B cell (primary cell): ENCODE measurements at regions of chr10 and their contacts with region 1.

Region 1: DNA sequence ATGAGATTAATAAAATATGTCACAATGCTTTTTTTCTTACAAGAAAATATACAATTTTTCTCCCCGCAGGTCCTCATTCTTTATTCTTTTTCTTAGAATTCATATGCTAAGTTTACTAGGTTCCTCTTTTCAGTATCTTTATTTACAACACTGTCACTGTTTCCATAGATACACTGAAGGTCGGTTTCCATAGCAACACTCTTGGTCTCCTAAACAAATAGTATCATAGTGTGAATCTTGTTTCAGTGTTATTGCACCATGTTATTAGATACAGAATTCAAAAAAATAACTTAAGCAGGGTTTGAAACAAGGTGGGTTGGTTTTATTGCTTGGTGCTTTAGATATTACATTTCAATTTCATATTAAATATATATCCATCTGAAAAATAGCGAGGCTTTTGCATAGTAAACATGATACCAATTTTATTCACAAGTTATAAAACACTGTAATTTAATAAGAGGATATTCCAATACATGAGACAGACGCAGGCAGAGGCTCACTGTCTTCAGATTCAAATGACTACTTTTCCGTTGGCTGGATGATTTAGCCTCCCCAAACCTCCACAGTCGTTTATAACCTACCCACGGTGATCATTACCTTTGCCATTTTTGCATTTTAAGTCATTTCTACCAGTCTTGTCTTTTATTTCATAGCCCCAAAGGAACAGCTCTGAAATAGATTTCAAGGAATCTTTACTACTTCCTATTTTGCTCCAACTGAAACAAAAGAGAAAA is 88.9 kb upstream of the KLF6 start:
- DNase-seq: peak; percentile 93
- ATAC-seq: peak; percentile 56
- H3K4me3 ChIP-seq: peak overlapping the region in 1 of 5 experiments; percentile 37
- H3K4me3 Mint-ChIP-seq: peak overlapping the region; percentile 57
- H3K27ac ChIP-seq: peak overlapping the region; percentile 89 to 99
- H3K27ac Mint-ChIP-seq: peak overlapping the region; percentile 98
- H3K4me1 ChIP-seq: peaks cover 44 to 50% of the 10 kb centered on the region in 2 donors
- H3K4me1 Mint-ChIP-seq: peaks cover 50% of the 10 kb centered on the region
- H3K27me3 ChIP-seq: no peaks in the 10 kb centered on the region
- H3K27me3 Mint-ChIP-seq: no peaks in the 10 kb centered on the region
- CTCF ChIP-seq: no peak

Region 2: GRCh38 chr10:3090914-3091787 is 782.7 kb before region 1 on chr10:
- CTCF ChIA-PET with region 1: no interaction called
- POLR2A ChIA-PET with region 1: no interaction called
- intact Hi-C with region 1: no loop called
- DNase-seq: no peak
- ATAC-seq: no peak
- H3K4me3 ChIP-seq: no peak overlapping the region
- H3K4me3 Mint-ChIP-seq: no peak overlapping the region
- H3K27ac ChIP-seq: no peak overlapping the region
- H3K27ac Mint-ChIP-seq: no peak overlapping the region
- H3K4me1 ChIP-seq: peaks cover 0 to 4% of the 10 kb centered on the region in 2 donors
- H3K4me1 Mint-ChIP-seq: peaks cover 21% of the 10 kb centered on the region
- H3K27me3 ChIP-seq: no peaks in the 10 kb centered on the region
- H3K27me3 Mint-ChIP-seq: no peaks in the 10 kb centered on the region
- CTCF ChIP-seq: no peak

Region 3: GRCh38 chr10:3805791-3806461 is 68.0 kb before region 1 on chr10:
- CTCF ChIA-PET with region 1: no interaction called
- POLR2A ChIA-PET with region 1: interaction called, 8 read pairs
- intact Hi-C with region 1: loop called (anchors 1 kb)
- DNase-seq: peak; percentile 59
- ATAC-seq: peak; percentile 54
- H3K4me3 ChIP-seq: peak overlapping the region in 1 of 5 experiments; percentile 16
- H3K4me3 Mint-ChIP-seq: peak overlapping the region; percentile 74
- H3K27ac ChIP-seq: peak overlapping the region; percentile 84 to 85
- H3K27ac Mint-ChIP-seq: peak overlapping the region; percentile 97
- H3K4me1 ChIP-seq: peaks cover 49 to 50% of the 10 kb centered on the region in 2 donors
- H3K4me1 Mint-ChIP-seq: peaks cover 58% of the 10 kb centered on the region
- H3K27me3 ChIP-seq: no peaks in the 10 kb centered on the region
- H3K27me3 Mint-ChIP-seq: no peaks in the 10 kb centered on the region
- CTCF ChIP-seq: no peak

Region 4: GRCh38 chr10:3852147-3852904 is 21.6 kb before region 1 on chr10:
- CTCF ChIA-PET with region 1: interaction called, 4 read pairs
- POLR2A ChIA-PET with region 1: interaction called, 3 read pairs
- intact Hi-C with region 1: loop called (anchors 1 kb)
- DNase-seq: peak; percentile 53
- ATAC-seq: peak; percentile 70
- H3K4me3 ChIP-seq: no peak overlapping the region
- H3K4me3 Mint-ChIP-seq: peak overlapping the region; percentile 50
- H3K27ac ChIP-seq: peak overlapping the region; percentile 66 to 74
- H3K27ac Mint-ChIP-seq: peak overlapping the region; percentile 85
- H3K4me1 ChIP-seq: peaks cover 15 to 22% of the 10 kb centered on the region in 2 donors
- H3K4me1 Mint-ChIP-seq: peaks cover 32% of the 10 kb centered on the region
- H3K27me3 ChIP-seq: no peaks in the 10 kb centered on the region
- H3K27me3 Mint-ChIP-seq: no peaks in the 10 kb centered on the region
- CTCF ChIP-seq: no peak

Region 5: GRCh38 chr10:3902054-3902808 is 28.3 kb after region 1 on chr10:
- CTCF ChIA-PET with region 1: interaction called, 11 read pairs
- POLR2A ChIA-PET with region 1: no interaction called
- intact Hi-C with region 1: loop called (anchors 1 kb)
- DNase-seq: peak; percentile 91
- ATAC-seq: peak; percentile 84
- H3K4me3 ChIP-seq: peak overlapping the region in 1 of 5 experiments; percentile 30
- H3K4me3 Mint-ChIP-seq: peak overlapping the region; percentile 57
- H3K27ac ChIP-seq: peak overlapping the region; percentile 94 to 99
- H3K27ac Mint-ChIP-seq: peak overlapping the region; percentile 94
- H3K4me1 ChIP-seq: peaks cover 50 to 64% of the 10 kb centered on the region in 2 donors
- H3K4me1 Mint-ChIP-seq: peaks cover 52% of the 10 kb centered on the region
- H3K27me3 ChIP-seq: no peaks in the 10 kb centered on the region
- H3K27me3 Mint-ChIP-seq: no peaks in the 10 kb centered on the region
- CTCF ChIP-seq: peak; percentile 24

Region 6: DNA sequence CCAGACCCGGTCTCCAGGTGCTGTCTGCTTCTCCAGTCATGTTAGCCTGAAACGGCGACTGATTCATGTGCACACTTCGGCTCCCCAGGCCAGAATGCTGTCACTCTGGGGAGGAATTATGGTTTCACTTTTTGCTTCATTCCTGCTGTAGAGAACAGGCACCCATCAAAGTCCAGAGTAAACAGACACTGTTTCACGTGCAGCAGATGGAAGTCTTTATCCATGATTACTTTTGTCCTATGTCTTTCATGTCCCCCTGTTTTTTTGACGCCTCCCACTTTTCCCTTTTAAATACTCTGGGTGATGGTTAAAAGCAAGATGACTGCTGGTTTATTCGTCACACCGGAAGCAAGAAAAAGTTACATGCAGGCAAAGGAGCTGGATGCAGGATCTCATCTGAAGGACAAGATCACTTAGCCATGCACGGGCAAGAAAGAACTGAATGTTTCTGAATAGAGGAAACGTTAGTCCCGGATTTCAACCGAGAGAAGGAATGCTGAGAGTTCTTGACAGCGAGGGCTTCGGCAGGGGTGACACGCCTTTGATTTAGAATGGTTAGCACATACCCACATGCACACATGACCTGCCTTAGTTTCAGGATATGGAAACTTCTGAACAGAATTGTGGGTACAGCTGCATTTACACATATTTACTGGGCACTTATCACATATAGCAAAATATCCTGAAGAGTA is 161.2 kb after region 1 on chr10:
- CTCF ChIA-PET with region 1: no interaction called
- POLR2A ChIA-PET with region 1: no interaction called
- intact Hi-C with region 1: loop called (anchors 10 kb)
- DNase-seq: peak; percentile 47
- ATAC-seq: peak; percentile 39
- H3K4me3 ChIP-seq: peak overlapping the region; percentile 26 to 53 (median 47)
- H3K4me3 Mint-ChIP-seq: peak overlapping the region; percentile 80
- H3K27ac ChIP-seq: peak overlapping the region in 1 of 2 donors; percentile 2
- H3K27ac Mint-ChIP-seq: peak overlapping the region; percentile 50
- H3K4me1 ChIP-seq: peaks cover 10 to 11% of the 10 kb centered on the region in 2 donors
- H3K4me1 Mint-ChIP-seq: peaks cover 23% of the 10 kb centered on the region
- H3K27me3 ChIP-seq: no peaks in the 10 kb centered on the region
- H3K27me3 Mint-ChIP-seq: no peaks in the 10 kb centered on the region
- CTCF ChIP-seq: no peak

Region 7: GRCh38 chr10:4174197-4174596 is 300.3 kb after region 1 on chr10:
- CTCF ChIA-PET with region 1: no interaction called
- POLR2A ChIA-PET with region 1: no interaction called
- intact Hi-C with region 1: no loop called
- DNase-seq: no peak
- ATAC-seq: no peak
- H3K4me3 ChIP-seq: no peak overlapping the region
- H3K4me3 Mint-ChIP-seq: no peak overlapping the region
- H3K27ac ChIP-seq: no peak overlapping the region
- H3K27ac Mint-ChIP-seq: no peak overlapping the region
- H3K4me1 ChIP-seq: peaks cover 16 to 21% of the 10 kb centered on the region in 2 donors
- H3K4me1 Mint-ChIP-seq: peaks cover 32% of the 10 kb centered on the region
- H3K27me3 ChIP-seq: no peaks in the 10 kb centered on the region
- H3K27me3 Mint-ChIP-seq: no peaks in the 10 kb centered on the region
- CTCF ChIP-seq: no peak

Region 8: GRCh38 chr10:4333459-4333894 is 459.6 kb after region 1 on chr10:
- CTCF ChIA-PET with region 1: no interaction called
- POLR2A ChIA-PET with region 1: no interaction called
- intact Hi-C with region 1: loop called (anchors 1 kb)
- DNase-seq: no peak
- ATAC-seq: peak; percentile 46
- H3K4me3 ChIP-seq: no peak overlapping the region
- H3K4me3 Mint-ChIP-seq: no peak overlapping the region
- H3K27ac ChIP-seq: peak overlapping the region; percentile 84 to 96
- H3K27ac Mint-ChIP-seq: no peak overlapping the region
- H3K4me1 ChIP-seq: peaks cover 3% of the 10 kb centered on the region in 2 donors
- H3K4me1 Mint-ChIP-seq: no peaks in the 10 kb centered on the region
- H3K27me3 ChIP-seq: no peaks in the 10 kb centered on the region
- H3K27me3 Mint-ChIP-seq: no peaks in the 10 kb centered on the region
- CTCF ChIP-seq: peak; percentile 5

Region 9: GRCh38 chr10:4639960-4640359 is 766.1 kb after region 1 on chr10:
- CTCF ChIA-PET with region 1: no interaction called
- POLR2A ChIA-PET with region 1: no interaction called
- intact Hi-C with region 1: no loop called
- DNase-seq: no peak
- ATAC-seq: no peak
- H3K4me3 ChIP-seq: no peak overlapping the region
- H3K4me3 Mint-ChIP-seq: no peak overlapping the region
- H3K27ac ChIP-seq: no peak overlapping the region
- H3K27ac Mint-ChIP-seq: no peak overlapping the region
- H3K4me1 ChIP-seq: no peaks in the 10 kb centered on the region
- H3K4me1 Mint-ChIP-seq: peaks cover 5% of the 10 kb centered on the region
- H3K27me3 ChIP-seq: no peaks in the 10 kb centered on the region
- H3K27me3 Mint-ChIP-seq: no peaks in the 10 kb centered on the region
- CTCF ChIP-seq: no peak